Activated CD4-positive, alpha-beta T cell treated with anti-CD3 and anti-CD28 coated beads, Interleukin-2, amount 10 ng/mL, durations not matched to agents 24 days and 14 days (primary cell): ENCODE measurements at regions of chr1 and their contacts with region 1.

Region 1: GRCh38 chr1:3856908-3857790 is at the starts of genes CEP104 and DFFB:
- DNase-seq: peak; percentile 99
- H3K4me3 Mint-ChIP-seq: peak within 1 kb of the TSS; percentile 96
- H3K27ac Mint-ChIP-seq: peak within 1 kb of the TSS; percentile 86
- H3K4me1 Mint-ChIP-seq: peaks cover 17% of the 10 kb centered on the region
- H3K27me3 Mint-ChIP-seq: no peaks in the 10 kb centered on the region
- total RNA-seq, gene CEP104: 46.2 and 48.1 TPM in 2 replicates
- total RNA-seq, gene DFFB: 15.0 and 15.9 TPM in 2 replicates

Region 2: GRCh38 chr1:3890389-3891328 is 33.5 kb after region 1 on chr1:
- intact Hi-C with region 1: loop called (anchors 2 kb)
- DNase-seq: peak; percentile 74
- H3K4me3 Mint-ChIP-seq: peak overlapping the region; percentile 55
- H3K27ac Mint-ChIP-seq: peak overlapping the region; percentile 41
- H3K4me1 Mint-ChIP-seq: peaks cover 21% of the 10 kb centered on the region
- H3K27me3 Mint-ChIP-seq: no peaks in the 10 kb centered on the region

Region 3: DNA sequence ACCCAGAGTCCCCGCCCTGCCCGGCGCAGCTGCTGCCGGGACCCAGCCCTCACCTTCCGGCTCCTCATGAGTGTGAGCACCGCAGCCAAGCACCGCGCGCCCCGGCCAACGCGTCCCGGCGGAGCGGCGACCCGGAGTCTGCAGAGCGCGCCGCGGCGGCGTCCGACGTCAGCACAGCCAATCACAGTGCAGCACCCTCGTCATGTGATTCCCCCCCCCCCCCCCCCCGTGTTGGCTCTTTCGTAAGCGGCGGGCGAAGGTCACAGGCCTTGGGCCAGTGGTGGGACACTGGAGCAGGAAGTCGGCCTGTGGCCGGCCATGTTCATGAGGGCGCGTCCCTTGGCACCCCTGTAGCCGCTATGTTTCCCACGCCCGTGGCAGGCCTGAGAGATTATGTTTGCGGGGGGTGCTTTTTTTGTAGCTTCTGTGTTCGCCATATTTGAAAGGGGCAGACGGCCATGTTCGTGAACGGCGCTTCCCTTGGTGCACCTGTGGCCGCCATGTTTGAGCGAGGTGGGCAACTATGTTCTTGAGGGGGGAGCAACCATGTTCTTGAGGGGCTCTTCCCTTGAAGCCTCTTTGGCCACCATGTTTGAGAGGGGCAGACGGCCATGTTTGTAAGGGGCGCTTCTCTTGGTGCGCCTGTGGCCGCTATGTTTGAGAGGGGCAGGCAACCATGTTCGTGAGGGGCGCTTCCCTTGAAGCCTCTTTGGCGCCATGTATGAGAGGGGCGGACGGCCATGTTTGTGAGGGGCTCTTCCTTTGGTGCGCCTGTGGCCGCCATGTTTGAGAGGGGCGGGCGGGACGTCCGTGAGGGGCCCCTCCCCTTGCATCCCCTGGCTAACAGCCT is 43.2 kb after region 1 on chr1 and contains the start of gene C1orf174:
- intact Hi-C with region 1: loop called (anchors 1 kb)
- DNase-seq: peak; percentile 98
- H3K4me3 Mint-ChIP-seq: peak within 1 kb of the TSS; percentile 97
- H3K27ac Mint-ChIP-seq: peak within 1 kb of the TSS; percentile 96
- H3K4me1 Mint-ChIP-seq: peaks cover 42% of the 10 kb centered on the region
- H3K27me3 Mint-ChIP-seq: no peaks in the 10 kb centered on the region
- total RNA-seq, gene C1orf174: 50.5 and 51.5 TPM in 2 replicates